Mammary epithelial cell (primary cell): ENCODE measurements at regions of chr2 and their contacts with region 1.

Region 1: DNA sequence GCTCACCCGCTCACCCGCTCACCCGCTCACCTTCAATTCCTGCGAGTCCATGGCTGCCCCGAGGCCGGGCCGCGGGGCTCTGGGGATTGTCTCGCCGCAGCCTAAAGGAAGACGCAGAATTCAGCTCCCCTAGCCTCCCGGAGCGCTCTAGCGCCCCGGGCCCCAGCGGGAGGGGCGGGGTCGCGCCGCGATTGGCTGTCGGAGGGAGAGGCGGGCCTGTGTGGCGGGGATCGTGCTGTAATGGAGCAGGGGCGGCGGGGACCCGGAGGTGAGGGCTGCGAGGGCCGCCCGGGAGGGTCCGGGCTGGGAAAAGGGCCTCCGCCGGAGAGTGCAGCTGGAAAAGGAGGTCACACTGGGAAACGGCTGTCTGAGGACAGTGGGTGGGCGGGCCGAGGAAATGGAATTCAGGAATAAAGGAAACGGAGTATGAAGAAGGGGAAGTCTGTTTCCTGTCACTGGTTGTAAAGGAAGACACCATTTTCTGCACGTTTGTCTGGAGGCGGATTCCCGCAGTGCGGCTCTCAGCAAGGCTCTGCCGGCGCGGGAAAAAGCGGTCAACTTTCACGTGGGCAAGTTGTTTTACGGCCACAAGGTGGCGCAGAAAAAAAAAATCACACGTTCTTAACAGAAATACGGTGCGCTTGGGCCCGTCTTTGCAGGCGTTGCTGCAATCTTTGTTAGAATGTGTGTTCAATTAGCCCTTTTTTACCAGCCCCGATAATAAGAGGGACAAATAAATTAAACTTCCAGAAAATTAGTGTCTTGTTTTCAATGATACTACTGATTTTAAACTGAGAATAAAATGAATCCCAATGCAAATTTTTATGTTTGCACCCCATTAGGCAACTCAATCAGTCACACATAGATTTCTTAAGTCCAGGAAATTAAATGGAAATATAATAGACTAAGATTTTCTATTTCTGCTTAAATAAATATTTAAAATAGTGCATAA is at the start of gene TTC21B:
- DNase-seq: peak; percentile 94
- H3K4me3 ChIP-seq: peak within 1 kb of the TSS; percentile 79 to 95 (median 84)
- H3K27ac ChIP-seq: peak within 1 kb of the TSS; percentile 85
- H3K4me1 ChIP-seq: peaks cover 5% of the 10 kb centered on the region
- H3K27me3 ChIP-seq: no peaks in the 10 kb centered on the region
- CTCF ChIP-seq: peak; percentile 68 to 71
- total RNA-seq, gene TTC21B: 9.3 to 20.7 TPM

Region 2: GRCh38 chr2:166516712-166517303 is 562.9 kb after region 1 on chr2:
- CTCF ChIA-PET with region 1: no interaction called
- dilution Hi-C with region 1: no loop called
- in situ Hi-C with region 1: no loop called
- intact Hi-C with region 1: loop called (anchors 5 kb)
- DNase-seq: peak; percentile 11
- H3K4me3 ChIP-seq: no peak overlapping the region
- H3K27ac ChIP-seq: no peak overlapping the region
- H3K4me1 ChIP-seq: peaks cover 13% of the 10 kb centered on the region
- H3K27me3 ChIP-seq: no peaks in the 10 kb centered on the region
- CTCF ChIP-seq: peak; percentile 51 to 67